Activated T-helper 2 cell treated with anti-CD3 and anti-CD28 coated beads, Interferon-gamma antibody, Interleukin-2, Interleukin-4, amounts not matched to agents 10 μg/mL and 5 μg/mL and 100 μg/mL, durations not matched to agents 14 hours and 24 hours and 36 hours (primary cell): ENCODE measurements at regions of chr11 and their contacts with region 1.

Region 1: GRCh38 chr11:116930177-116930576 is 92.8 kb upstream of the APOA1 start:
- DNase-seq: peak; percentile 43
- H3K4me3 Mint-ChIP-seq: peak overlapping the region; percentile 78
- H3K27ac Mint-ChIP-seq: peak overlapping the region; percentile 83
- H3K4me1 Mint-ChIP-seq: peaks cover 67% of the 10 kb centered on the region
- H3K27me3 Mint-ChIP-seq: no peaks in the 10 kb centered on the region

Region 2: GRCh38 chr11:116986521-116987105 is 56.4 kb after region 1 on chr11:
- intact Hi-C with region 1: loop called (anchors 1 kb)
- DNase-seq: no peak
- H3K4me3 Mint-ChIP-seq: peak overlapping the region; percentile 49
- H3K27ac Mint-ChIP-seq: peak overlapping the region; percentile 80
- H3K4me1 Mint-ChIP-seq: peaks cover 56% of the 10 kb centered on the region
- H3K27me3 Mint-ChIP-seq: no peaks in the 10 kb centered on the region

Region 3: DNA sequence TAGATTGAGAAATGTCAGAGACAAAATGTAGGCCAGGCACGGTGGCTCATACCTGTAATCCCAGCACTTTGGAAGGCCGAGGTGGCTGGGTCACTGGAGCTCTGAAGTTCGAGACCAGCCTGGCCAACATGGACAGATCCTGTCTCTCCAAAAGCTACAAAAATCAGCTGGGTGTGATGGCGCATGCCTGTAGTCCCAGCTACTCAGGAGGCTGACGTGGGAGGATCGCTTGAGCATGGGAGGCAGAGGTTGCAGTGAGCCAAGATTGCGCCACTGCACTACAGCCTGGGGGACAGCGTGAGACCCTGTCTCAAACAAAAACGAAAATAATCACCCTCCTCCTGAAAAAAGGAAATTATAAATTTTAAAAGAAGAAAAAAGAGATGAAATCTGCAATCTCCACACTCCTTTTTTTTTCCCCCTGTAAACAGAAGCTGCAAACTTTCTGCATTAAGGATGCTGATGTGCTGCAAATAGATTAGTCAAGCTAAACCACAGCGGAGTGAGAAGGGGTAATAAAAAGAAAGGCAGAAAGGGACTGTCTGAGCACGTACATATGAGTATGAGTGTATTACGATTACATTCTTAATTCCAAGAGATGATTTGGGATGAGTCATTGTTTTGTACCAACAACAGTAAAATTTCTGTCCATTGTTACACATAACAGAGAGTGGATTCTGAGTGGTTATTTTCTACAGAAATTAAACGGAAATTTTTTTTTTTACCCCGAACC is 80.8 kb after region 1 on chr11:
- intact Hi-C with region 1: loop called (anchors 2 kb)
- DNase-seq: no peak
- H3K4me3 Mint-ChIP-seq: no peak overlapping the region
- H3K27ac Mint-ChIP-seq: peak overlapping the region; percentile 74
- H3K4me1 Mint-ChIP-seq: peaks cover 35% of the 10 kb centered on the region
- H3K27me3 Mint-ChIP-seq: no peaks in the 10 kb centered on the region

Region 4: GRCh38 chr11:117098269-117099232 is 168.4 kb after region 1 on chr11 and contains the start of gene SIK3:
- intact Hi-C with region 1: loop called (anchors 2 kb)
- DNase-seq: peak; percentile 87
- H3K4me3 Mint-ChIP-seq: peak within 1 kb of the TSS; percentile 98
- H3K27ac Mint-ChIP-seq: peak within 1 kb of the TSS; percentile 90
- H3K4me1 Mint-ChIP-seq: peaks cover 48% of the 10 kb centered on the region
- H3K27me3 Mint-ChIP-seq: peaks cover 6% of the 10 kb centered on the region
- total RNA-seq, gene SIK3: 25.3 and 25.6 TPM in 2 replicates